Activated T-helper 1 cell treated with anti-CD3 and anti-CD28 coated beads, Interleukin-12 subunit alpha, Interleukin-12 subunit beta, Interleukin-2, Interleukin-4 antibody, amounts not matched to agents 30 ng/mL and 10 ng/mL and 1 ng/mL, durations not matched to agents 14 hours and 24 hours and 36 hours (primary cell): ENCODE measurements at regions of chr3 and their contacts with region 1.

Region 1: DNA sequence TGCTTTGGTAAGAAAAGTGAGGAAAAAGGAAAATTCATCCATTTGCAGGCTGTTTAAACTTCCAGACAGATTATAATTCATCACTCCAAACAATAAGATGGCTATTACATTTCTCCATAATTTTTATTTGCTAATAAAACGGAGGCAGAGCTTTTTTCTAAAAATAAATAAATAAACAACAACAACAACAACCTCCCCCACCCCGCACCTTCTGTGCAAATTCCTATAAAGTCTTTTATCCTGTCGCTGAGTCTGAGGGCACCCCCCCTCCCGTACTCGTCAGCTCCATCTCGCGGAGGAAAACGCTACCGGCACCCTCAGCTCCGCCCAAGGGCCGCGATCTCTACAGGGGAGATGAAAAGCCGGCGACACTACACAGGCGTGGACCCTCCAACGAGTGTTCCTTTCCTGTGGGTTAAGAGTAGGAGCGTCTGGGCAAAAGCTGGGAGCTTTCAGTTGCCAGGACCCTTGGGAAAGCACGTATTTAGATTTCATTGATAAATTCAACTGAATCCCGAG is 1.0 kb upstream of the ATP1B3 start:
- DNase-seq: peak; percentile 78
- H3K4me3 Mint-ChIP-seq: peak overlapping the region; percentile 92
- H3K27ac Mint-ChIP-seq: peak overlapping the region; percentile 90
- H3K4me1 Mint-ChIP-seq: peaks cover 30% of the 10 kb centered on the region
- H3K27me3 Mint-ChIP-seq: peaks cover 2% of the 10 kb centered on the region

Region 2: GRCh38 chr3:140941434-140942220 is 933.8 kb before region 1 on chr3 and contains the start of gene SLC25A36:
- intact Hi-C with region 1: loop called (anchors 2 kb)
- DNase-seq: peak; percentile 95
- H3K4me3 Mint-ChIP-seq: peak within 1 kb of the TSS; percentile 92
- H3K27ac Mint-ChIP-seq: peak within 1 kb of the TSS; percentile 95
- H3K4me1 Mint-ChIP-seq: peaks cover 36% of the 10 kb centered on the region
- H3K27me3 Mint-ChIP-seq: peaks cover 12% of the 10 kb centered on the region
- total RNA-seq, gene SLC25A36: 49.5 and 52.3 TPM in 2 replicates

Region 3: DNA sequence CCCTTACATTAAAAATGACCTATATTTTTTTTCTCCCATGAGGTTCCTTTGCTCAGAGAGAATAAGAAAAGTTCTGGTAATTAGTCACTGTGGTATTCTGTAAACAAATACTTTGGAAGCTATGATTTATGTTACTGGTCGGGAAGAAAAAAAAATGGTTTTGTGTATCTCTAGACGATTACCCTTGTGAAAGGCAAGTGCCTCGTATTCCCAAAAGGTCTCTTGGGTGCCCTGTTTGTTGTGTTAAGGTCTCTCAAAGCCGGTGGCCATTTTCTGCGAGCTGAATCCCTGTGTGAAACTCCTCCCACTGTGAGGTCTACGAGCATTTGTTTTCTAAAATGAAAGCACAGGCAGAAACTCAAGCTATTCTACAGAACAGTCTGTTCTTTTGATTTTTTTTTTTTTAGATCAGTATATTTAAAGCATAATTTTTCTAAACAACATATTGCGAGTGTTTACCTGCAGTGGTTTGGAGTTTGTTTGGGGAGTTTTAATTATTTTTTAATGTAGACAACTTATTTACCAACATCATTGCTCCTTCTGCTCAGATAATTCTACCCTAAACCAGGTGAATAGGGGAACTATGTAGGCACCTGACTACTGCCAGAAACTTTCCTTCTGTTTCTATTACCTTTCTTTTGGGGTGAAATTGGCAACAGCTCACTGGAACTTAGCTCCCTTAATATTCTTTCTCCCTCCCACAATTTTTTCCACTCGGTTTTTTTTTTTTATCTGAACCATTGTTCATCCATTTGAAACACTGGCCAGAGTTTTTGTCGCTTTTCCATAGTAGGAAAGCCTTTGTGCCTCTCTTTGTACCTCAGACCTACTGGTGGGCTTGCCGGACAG is 463.1 kb before region 1 on chr3:
- intact Hi-C with region 1: loop called (anchors 5 kb)
- DNase-seq: peak; percentile 55
- H3K4me3 Mint-ChIP-seq: peak overlapping the region; percentile 85
- H3K27ac Mint-ChIP-seq: peak overlapping the region; percentile 98
- H3K4me1 Mint-ChIP-seq: peaks cover 61% of the 10 kb centered on the region
- H3K27me3 Mint-ChIP-seq: no peaks in the 10 kb centered on the region

Region 4: GRCh38 chr3:141498598-141499223 is 376.7 kb before region 1 on chr3:
- intact Hi-C with region 1: loop called (anchors 5 kb)
- DNase-seq: peak; percentile 89
- H3K4me3 Mint-ChIP-seq: peak overlapping the region; percentile 54
- H3K27ac Mint-ChIP-seq: peak overlapping the region; percentile 83
- H3K4me1 Mint-ChIP-seq: peaks cover 66% of the 10 kb centered on the region
- H3K27me3 Mint-ChIP-seq: no peaks in the 10 kb centered on the region

Region 5: DNA sequence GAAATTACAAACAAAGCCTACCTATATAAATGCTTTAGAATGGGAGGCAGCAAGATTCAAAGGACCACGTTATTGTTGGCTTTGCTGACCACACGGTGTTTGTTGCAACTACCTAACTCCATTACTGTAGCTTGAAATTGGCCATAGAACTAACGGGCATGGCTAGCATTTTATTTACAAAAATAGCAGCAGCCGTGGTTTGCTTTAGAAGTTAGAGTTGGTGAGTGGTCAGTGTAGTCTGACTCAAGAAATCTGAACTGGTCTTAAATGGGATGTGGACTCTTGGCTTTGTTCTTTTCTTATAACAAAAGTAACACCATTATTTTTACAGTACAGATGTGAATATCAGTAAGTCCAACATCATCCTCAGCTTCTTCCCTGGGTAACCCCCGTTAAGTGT is 11.6 kb after region 1 on chr3:
- intact Hi-C with region 1: loop called (anchors 1 kb)
- DNase-seq: no peak
- H3K4me3 Mint-ChIP-seq: no peak overlapping the region
- H3K27ac Mint-ChIP-seq: no peak overlapping the region
- H3K4me1 Mint-ChIP-seq: peaks cover 50% of the 10 kb centered on the region
- H3K27me3 Mint-ChIP-seq: no peaks in the 10 kb centered on the region

Region 6: DNA sequence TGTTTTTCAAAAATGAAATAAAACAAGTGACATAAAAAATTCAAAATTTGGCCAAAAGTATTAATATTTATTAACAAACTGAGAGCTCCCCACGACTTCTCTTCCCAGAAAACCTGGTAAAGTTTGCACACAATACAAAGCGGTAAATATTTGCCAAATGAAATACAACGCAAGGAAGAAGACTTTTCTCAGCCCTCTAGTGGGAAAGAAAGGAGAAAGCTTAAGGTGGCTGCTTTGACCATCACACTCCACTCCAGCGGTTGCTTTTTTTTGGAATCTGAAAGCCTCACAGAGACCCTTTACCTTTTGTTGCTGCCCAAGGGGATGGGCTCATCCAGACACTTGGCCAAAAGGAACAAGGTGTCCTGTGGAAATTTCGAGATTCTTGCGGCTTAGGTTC is 351.1 kb after region 1 on chr3:
- intact Hi-C with region 1: loop called (anchors 10 kb)
- DNase-seq: no peak
- H3K4me3 Mint-ChIP-seq: peak overlapping the region; percentile 72
- H3K27ac Mint-ChIP-seq: no peak overlapping the region
- H3K4me1 Mint-ChIP-seq: peaks cover 20% of the 10 kb centered on the region
- H3K27me3 Mint-ChIP-seq: no peaks in the 10 kb centered on the region